ENCODE measurements at regions of chr14 and their contacts with region 1.

Region 1: DNA sequence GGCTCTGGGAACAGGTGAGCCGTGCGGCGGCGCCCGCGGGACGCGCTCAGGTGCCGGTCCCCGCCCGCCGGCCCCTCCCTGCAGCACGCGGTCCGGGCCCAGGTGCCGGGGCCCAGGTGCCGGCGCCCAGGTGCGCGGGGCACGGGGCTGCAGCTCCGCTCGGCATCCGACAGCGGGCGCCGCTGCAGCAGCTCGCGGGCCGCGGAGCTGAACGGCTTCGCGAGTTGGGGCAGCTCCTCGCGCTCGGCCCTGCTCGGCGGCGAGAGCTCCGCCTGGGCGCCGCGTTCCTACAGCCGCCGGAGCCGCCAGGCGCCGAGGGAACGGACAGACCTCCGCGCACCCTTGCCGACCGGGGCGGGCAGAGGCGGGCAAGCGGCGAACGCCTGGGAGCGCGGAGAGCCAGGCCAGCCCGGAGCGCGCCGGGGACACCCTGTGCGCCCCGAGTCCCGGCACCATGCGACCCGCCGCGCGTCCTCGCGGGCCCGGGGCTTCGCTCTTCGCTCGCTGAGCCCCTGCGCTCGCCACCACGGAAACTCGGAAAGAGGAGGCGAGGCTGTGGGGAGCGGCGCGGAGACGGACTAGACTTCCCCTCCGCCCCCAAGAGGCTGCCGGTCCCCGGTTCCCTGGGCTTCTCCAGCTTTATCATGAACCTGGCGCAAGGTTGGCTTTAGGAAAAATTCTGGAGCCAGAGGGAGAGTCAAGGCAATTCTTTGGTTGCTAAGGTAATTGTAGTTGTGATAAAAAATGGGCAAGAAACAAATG is at the start of gene RGS6:
- DNase-seq: peak in 4 of 5 donors; percentile 27 to 63 (median 40)
- ATAC-seq: peak; percentile 39 to 93 (median 81)
- H3K4me3 ChIP-seq: peak within 1 kb of the TSS; percentile 55 to 79 (median 68)
- H3K27ac ChIP-seq: peak within 1 kb of the TSS in 11 of 12 donors; percentile 43 to 81 (median 70)
- H3K4me1 ChIP-seq: peaks cover 0 to 21% (median 4%) of the 10 kb centered on the region in 12 donors
- H3K27me3 ChIP-seq: peaks cover 0 to 53% (median 4%) of the 10 kb centered on the region in 9 donors
- CTCF ChIP-seq: peak in 9 of 12 donors; percentile 5 to 57 (median 35)
- POLR2A ChIP-seq: no peak
- total RNA-seq, gene RGS6: 9.5 to 25.4 (median 18.8) TPM

Region 2: GRCh38 chr14:71988939-71989338 is 56.5 kb after region 1 on chr14:
- intact Hi-C with region 1: loop called in 1 of 10 experiments (anchors 1 kb)
- DNase-seq: peak in 4 of 5 donors; percentile 25 to 64 (median 36)
- ATAC-seq: peak in 3 of 4 donors; percentile 33 to 67 (median 52)
- H3K4me3 ChIP-seq: no peak overlapping the region
- H3K27ac ChIP-seq: peak overlapping the region in 9 of 12 donors; percentile 52 to 86 (median 74)
- H3K4me1 ChIP-seq: peaks cover 0 to 51% (median 26%) of the 10 kb centered on the region in 12 donors
- H3K27me3 ChIP-seq: no peaks in the 10 kb centered on the region
- CTCF ChIP-seq: no peak
- POLR2A ChIP-seq: no peak

Region 3: GRCh38 chr14:72023722-72024407 is 91.5 kb after region 1 on chr14:
- intact Hi-C with region 1: loop called in 2 of 10 experiments (anchors 2 to 10 kb)
- DNase-seq: peak in 2 of 5 donors; percentile 19 to 20
- ATAC-seq: peak in 3 of 4 donors; percentile 58 to 63 (median 61)
- H3K4me3 ChIP-seq: no peak overlapping the region
- H3K27ac ChIP-seq: peak overlapping the region in 1 of 12 donors; percentile 37
- H3K4me1 ChIP-seq: peaks cover 0 to 24% (median 13%) of the 10 kb centered on the region in 12 donors
- H3K27me3 ChIP-seq: no peaks in the 10 kb centered on the region
- CTCF ChIP-seq: peak; percentile 45 to 72 (median 62)
- POLR2A ChIP-seq: no peak

Region 4: GRCh38 chr14:72186401-72186905 is 254.1 kb after region 1 on chr14:
- intact Hi-C with region 1: loop called in 1 of 10 experiments (anchors 10 kb)
- DNase-seq: peak in 3 of 5 donors; percentile 8 to 29 (median 24)
- ATAC-seq: peak; percentile 91 to 96 (median 94)
- H3K4me3 ChIP-seq: no peak overlapping the region
- H3K27ac ChIP-seq: peak overlapping the region in 10 of 12 donors; percentile 9 to 71 (median 35)
- H3K4me1 ChIP-seq: peaks cover 0 to 27% (median 15%) of the 10 kb centered on the region in 12 donors
- H3K27me3 ChIP-seq: no peaks in the 10 kb centered on the region
- CTCF ChIP-seq: no peak
- POLR2A ChIP-seq: no peak

Region 5: DNA sequence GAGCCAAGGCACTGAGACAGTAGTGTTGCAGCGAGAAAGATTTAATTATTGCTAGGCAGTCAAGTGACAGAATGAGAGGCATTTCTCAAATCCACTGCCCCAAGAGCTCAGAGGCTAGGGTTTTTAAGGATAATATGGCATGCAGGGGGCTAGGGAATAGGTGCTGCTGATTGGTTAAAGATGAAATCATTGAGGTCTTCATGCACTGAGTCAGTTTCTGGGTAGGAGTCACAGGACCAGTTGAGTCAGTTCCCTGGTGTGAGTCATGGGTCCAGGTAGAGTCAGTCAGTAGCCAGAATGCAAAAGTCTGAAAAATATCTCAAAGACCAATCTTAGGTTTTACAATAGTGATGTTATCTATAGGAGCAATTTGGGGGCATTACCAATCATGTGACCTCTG is 323.7 kb after region 1 on chr14:
- intact Hi-C with region 1: no loop called
- DNase-seq: no peak
- ATAC-seq: no peak
- H3K4me3 ChIP-seq: no peak overlapping the region
- H3K27ac ChIP-seq: no peak overlapping the region
- H3K4me1 ChIP-seq: peaks cover 0 to 12% (median 2%) of the 10 kb centered on the region in 12 donors
- H3K27me3 ChIP-seq: no peaks in the 10 kb centered on the region
- CTCF ChIP-seq: no peak
- POLR2A ChIP-seq: no peak

Region 6: GRCh38 chr14:72420725-72421474 is 488.5 kb after region 1 on chr14:
- intact Hi-C with region 1: loop called in 8 of 10 experiments (anchors 2 to 10 kb)
- DNase-seq: peak; percentile 49 to 78 (median 63)
- ATAC-seq: peak in 3 of 4 donors; percentile 35 to 52 (median 47)
- H3K4me3 ChIP-seq: no peak overlapping the region
- H3K27ac ChIP-seq: no peak overlapping the region
- H3K4me1 ChIP-seq: peaks cover 0 to 3% (median 0%) of the 10 kb centered on the region in 12 donors
- H3K27me3 ChIP-seq: no peaks in the 10 kb centered on the region
- CTCF ChIP-seq: peak; percentile 82 to 98 (median 91)
- POLR2A ChIP-seq: no peak